A549 (cell line): ENCODE measurements at regions of chr4 and their contacts with region 1.

Region 1: DNA sequence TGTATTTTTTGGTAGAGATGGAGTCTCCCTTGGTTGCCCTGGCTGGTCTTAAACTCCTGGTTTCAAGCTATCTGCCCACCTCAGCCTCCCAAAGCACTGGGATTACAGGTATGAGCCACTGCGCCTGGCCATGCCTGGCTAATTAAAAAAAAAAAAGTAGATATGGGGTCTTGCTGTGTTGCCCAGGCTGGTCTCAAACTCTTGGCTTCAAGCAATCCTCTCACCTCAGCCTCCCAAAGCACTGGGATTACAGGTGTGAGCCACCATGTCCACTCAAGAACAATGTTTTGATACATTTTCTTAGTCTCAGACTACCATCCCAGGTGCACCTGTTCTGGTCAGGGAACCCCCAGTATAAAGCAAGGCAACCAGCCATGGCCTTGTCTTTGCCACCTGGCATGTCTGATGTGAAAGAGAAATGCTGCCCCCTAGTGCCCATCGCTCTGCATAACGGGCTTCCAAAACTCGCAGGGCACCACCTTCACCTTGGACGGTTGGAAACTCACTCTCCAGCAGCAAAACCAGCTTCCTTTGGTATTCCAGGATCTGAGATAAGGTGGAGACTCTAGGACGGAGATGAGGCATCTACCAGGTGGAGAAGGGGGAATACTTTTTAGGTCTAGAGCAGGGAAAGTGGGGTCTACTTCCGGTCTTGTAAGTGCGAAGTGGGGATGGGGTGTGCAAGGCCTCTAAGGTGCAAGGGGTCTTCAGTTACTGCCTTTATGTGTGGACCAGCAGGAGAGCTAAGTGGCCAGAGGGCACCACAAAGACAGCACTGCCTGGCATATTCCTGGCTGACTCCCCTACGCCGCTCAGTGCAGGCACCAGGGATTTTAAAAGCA is 47.7 kb upstream of the AFAP1 start:
- DNase-seq: peak; percentile 41 to 75
- ATAC-seq: peak; percentile 82 to 90; a peak in 5 of 6 replicates
- H3K4me3 ChIP-seq: no peak overlapping the region
- H3K27ac ChIP-seq: peak overlapping the region; percentile 45 to 82; a peak in 5 of 6 replicates
- H3K4me1 ChIP-seq: peaks cover 13% of the 10 kb centered on the region; the same call in 2 of the 3 replicates
- CTCF ChIP-seq: peak; percentile 76
- EP300 ChIP-seq: no peak
- POLR2A ChIP-seq: no peak
- RAD21 ChIP-seq: peak; percentile 91 to 95

Region 2: DNA sequence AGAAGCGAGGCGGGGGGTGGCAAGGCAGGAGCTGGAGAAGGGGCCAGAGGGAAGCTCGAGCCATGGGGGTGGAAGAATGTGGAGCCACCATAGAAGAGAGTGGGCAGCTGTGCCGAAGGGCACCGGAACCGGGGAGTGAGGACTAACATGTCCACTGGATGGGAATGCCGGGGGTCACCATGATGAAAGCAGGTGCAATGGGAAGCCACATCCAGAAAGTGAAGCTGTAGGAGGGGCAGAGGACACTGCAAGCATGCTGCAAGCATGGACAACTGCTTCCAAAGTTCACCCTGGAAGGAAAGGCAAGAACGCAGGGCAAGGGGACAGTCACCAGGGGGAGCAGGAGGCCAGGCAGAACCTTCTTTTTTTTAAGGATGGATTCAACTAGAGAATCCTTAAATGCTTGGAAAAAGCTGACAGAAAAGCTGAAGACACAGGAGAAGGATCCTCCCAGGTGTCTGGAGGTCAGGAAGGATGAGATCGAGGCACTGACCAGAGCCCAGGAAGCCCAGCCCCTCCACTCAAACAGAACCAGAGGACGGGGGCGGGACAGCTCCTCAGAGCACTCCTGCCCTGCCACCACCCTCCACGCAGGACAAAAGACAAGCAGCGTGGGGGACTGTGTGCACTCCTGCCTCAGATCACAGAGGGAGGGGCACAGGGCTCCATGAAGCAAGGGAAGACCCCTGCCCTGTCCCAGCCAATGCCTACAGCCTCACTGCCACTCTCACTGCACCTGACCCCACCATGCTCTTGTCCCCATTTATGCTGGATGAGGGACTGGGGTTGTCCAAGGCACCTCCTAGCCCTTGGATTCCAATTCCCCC is 216.9 kb before region 1 on chr4:
- CTCF ChIA-PET with region 1: interaction called, 13 read pairs
- POLR2A ChIA-PET with region 1: no interaction called
- DNase-seq: peak; percentile 22 to 33
- ATAC-seq: peak; percentile 37 to 63; a peak in 4 of 6 replicates
- H3K4me3 ChIP-seq: no peak overlapping the region
- H3K27ac ChIP-seq: 0 out of 6 replicates have a peak overlapping the region, but pooled peaks of 1 of the 2 experiments have one; percentile 26
- H3K4me1 ChIP-seq: no peaks in the 10 kb centered on the region
- CTCF ChIP-seq: peak; percentile 36
- EP300 ChIP-seq: no peak
- POLR2A ChIP-seq: no peak
- RAD21 ChIP-seq: peak in 1 of 2 experiments; percentile 43; a peak in 2 of 5 replicates

Region 3: DNA sequence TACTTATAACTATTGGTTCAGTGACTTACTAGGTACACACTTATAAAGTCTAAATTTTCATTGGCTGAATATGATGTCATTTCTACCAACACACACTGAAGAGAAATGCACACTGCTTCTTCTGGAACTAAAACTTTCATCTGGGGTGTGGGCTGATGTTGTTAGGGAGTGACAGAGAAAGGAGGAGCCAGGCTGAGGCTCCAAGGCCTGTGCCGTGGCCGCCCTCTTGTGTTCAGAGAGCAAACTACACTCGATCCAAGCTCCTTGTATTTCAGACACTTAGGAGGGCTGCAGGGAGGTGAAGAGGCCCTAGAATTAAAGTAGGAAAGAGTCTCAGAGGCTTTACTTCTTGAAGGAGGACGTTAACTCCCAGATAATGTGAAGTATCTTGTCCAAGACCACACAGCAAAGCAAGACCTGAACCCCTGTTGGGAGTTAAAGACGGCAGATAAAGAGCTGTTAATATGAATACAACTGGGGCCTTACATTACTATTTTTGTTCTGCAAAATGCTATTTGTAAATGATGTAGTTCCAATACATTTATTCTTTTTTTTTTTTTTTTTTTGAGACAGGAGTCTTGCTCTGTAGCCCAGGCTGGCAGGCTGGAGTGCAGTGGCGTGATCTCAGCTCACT is 185.2 kb before region 1 on chr4:
- CTCF ChIA-PET with region 1: interaction called, 94 read pairs
- POLR2A ChIA-PET with region 1: no interaction called
- DNase-seq: peak; percentile 64 to 77
- ATAC-seq: peak; percentile 25 to 54; a peak in 3 of 6 replicates
- H3K4me3 ChIP-seq: no peak overlapping the region
- H3K27ac ChIP-seq: peak overlapping the region; percentile 60 to 91; a peak in 5 of 6 replicates
- H3K4me1 ChIP-seq: peaks cover 45% of the 10 kb centered on the region
- CTCF ChIP-seq: peak; percentile 65
- EP300 ChIP-seq: no peak
- POLR2A ChIP-seq: no peak
- RAD21 ChIP-seq: peak; percentile 62

Region 4: DNA sequence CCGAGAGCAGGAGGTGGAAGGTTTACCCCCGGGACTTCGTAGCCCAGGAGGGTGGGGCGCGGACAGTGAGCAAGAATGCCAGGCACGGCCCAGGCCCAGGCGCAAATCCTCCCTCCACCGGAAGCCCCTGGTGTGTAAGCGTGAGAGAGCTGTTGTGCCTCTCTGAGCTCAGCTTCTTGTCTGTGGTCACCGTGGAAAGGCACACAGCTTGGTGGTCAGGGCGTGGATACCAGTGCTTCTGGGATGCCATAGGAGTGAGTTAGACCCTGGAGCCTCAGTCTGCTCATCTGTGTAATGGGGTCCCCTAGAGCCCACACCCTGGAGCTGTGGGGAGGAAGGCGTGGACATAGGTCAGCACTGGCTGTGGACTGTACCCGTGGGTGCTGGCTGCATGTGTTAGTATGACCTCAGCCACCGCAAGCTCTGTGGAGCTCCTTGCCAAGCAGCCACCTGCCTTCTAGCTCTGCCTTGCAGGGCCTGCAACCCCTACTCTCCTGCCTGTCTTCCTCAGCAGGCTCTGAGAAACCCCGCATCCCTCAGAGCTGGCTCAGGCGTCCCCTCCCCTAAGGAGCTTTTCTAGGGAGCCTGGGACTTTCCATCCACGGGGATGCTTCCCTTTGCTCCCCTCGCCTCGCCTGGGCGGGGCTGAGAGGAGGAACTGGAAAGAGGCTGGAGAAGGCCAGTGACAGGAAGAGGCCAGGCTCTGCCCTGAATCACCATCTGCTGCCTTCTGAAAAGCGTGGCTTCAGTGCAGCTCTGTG is 19.7 kb before region 1 on chr4:
- CTCF ChIA-PET with region 1: interaction called, 21 read pairs
- POLR2A ChIA-PET with region 1: no interaction called
- DNase-seq: no peak
- ATAC-seq: peak in 1 of 2 experiments; percentile 14; a peak in 3 of 6 replicates
- H3K4me3 ChIP-seq: no peak overlapping the region
- H3K27ac ChIP-seq: peak overlapping the region; percentile 90 to 97
- H3K4me1 ChIP-seq: peaks cover 64% of the 10 kb centered on the region
- CTCF ChIP-seq: no peak
- EP300 ChIP-seq: no peak
- POLR2A ChIP-seq: no peak
- RAD21 ChIP-seq: no peak

Region 5: DNA sequence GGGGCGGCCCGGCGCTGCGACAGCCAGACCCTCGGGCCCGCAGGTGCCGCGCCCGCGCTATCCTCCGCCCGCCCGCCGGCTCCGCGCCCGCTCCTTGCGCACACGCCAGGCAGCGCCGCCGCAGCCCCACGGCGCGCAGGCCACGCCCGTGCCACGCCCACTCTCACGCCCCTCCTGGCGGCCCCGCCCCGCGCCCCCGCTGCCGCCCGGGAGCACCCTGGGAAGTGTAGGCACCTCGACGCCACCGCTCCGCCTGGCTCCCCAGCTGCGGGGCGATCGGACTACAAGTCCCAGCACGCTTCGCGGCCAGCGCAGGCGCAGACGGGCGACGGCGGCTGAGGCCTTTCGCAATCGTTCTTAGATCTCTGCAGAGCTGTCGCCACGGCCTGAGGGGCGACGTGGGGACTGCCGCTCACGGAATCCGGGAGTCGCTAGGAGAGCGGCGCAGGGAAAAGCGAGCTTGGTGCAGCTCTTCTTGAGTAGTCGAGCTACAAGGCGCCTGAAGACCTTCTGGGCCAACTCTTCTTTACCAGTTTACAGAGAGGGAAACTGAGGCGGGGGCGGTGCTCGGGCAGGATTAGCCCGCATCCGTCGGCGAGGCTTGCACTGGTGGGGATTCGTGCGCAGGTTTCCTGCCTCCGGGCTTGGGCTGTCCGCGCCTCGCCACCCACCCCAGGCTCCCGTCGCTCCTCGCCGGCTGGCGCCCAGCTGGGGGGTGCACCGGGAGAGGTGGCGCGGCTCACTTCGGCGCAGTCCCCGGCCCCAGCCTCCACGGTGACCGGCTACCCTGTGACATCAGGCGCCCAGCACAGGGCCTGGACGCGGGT is 171.6 kb after region 1 on chr4 and contains the start of gene ABLIM2:
- CTCF ChIA-PET with region 1: no interaction called
- POLR2A ChIA-PET with region 1: no interaction called
- DNase-seq: peak; percentile 45 to 95
- ATAC-seq: peak; percentile 87 to 97
- H3K4me3 ChIP-seq: peak within 1 kb of the TSS; percentile 54
- H3K27ac ChIP-seq: peak within 1 kb of the TSS; percentile 66 to 84
- H3K4me1 ChIP-seq: peaks cover 3% of the 10 kb centered on the region; the same call in 1 of the 3 replicates
- CTCF ChIP-seq: no peak
- EP300 ChIP-seq: no peak
- POLR2A ChIP-seq: peak; percentile 73
- RAD21 ChIP-seq: no peak
- polyA plus RNA-seq, gene ABLIM2: 0.21 and 0.37 TPM in 2 replicates

Region 6: GRCh38 chr4:8176547-8177399 is 189.4 kb after region 1 on chr4:
- CTCF ChIA-PET with region 1: no interaction called
- POLR2A ChIA-PET with region 1: no interaction called
- DNase-seq: peak; percentile 60 to 73
- ATAC-seq: peak; percentile 90 to 97
- H3K4me3 ChIP-seq: no peak overlapping the region
- H3K27ac ChIP-seq: peak overlapping the region in 1 of 2 experiments; percentile 57; a peak in 2 of 6 replicates
- H3K4me1 ChIP-seq: peaks cover 8% of the 10 kb centered on the region
- CTCF ChIP-seq: peak; percentile 69
- EP300 ChIP-seq: no peak
- POLR2A ChIP-seq: no peak
- RAD21 ChIP-seq: peak; percentile 77 to 88

Region 7: GRCh38 chr4:8362483-8362882 is 375.1 kb after region 1 on chr4:
- CTCF ChIA-PET with region 1: no interaction called
- POLR2A ChIA-PET with region 1: no interaction called
- DNase-seq: no peak
- ATAC-seq: no peak
- H3K4me3 ChIP-seq: no peak overlapping the region
- H3K27ac ChIP-seq: no peak overlapping the region
- H3K4me1 ChIP-seq: no peaks in the 10 kb centered on the region
- CTCF ChIP-seq: no peak
- EP300 ChIP-seq: no peak
- POLR2A ChIP-seq: no peak
- RAD21 ChIP-seq: no peak

Region 8: GRCh38 chr4:8594097-8595038 is 607.0 kb after region 1 on chr4:
- CTCF ChIA-PET with region 1: no interaction called
- POLR2A ChIA-PET with region 1: no interaction called
- DNase-seq: peak; percentile 70 to 77
- ATAC-seq: peak; percentile 51 to 83; a peak in 5 of 6 replicates
- H3K4me3 ChIP-seq: no peak overlapping the region
- H3K27ac ChIP-seq: no peak overlapping the region
- H3K4me1 ChIP-seq: no peaks in the 10 kb centered on the region
- CTCF ChIP-seq: peak; percentile 70
- EP300 ChIP-seq: no peak
- POLR2A ChIP-seq: no peak
- RAD21 ChIP-seq: peak; percentile 72 to 75